ENCODE measurements at regions of chr4 and their contacts with region 1.

Region 1: GRCh38 chr4:78288327-78288726 is 231.2 kb downstream of the FRAS1 start:
- DNase-seq: no peak
- H3K4me3 ChIP-seq: no peak overlapping the region
- H3K27ac ChIP-seq: no peak overlapping the region
- H3K4me1 ChIP-seq: peaks cover 11% of the 10 kb centered on the region
- H3K27me3 ChIP-seq: no peaks in the 10 kb centered on the region
- CTCF ChIP-seq: no peak

Region 2: DNA sequence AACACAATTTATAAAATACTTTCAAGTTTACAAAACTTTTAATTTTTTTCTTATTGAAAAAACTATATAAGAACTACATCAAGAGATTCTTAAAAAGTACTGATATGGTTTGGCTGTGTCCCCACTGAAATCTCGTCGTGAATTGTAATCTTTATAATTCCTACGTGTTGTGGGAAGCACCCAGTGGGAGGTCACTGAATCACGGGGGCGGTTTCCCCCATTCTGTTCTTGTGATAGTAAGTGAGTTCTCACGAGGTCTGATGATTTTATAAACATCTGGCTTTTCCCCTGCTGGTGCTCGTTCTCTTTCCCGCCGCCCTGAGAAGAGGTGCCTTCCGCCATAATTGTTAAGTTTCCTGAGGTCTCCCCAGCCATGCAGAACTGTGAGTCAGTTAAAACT is 142.7 kb before region 1 on chr4:
- CTCF ChIA-PET with region 1: no interaction called
- POLR2A ChIA-PET with region 1: interaction called, 15 read pairs
- intact Hi-C with region 1: no loop called
- DNase-seq: no peak
- H3K4me3 ChIP-seq: no peak overlapping the region
- H3K27ac ChIP-seq: no peak overlapping the region
- H3K4me1 ChIP-seq: no peaks in the 10 kb centered on the region
- H3K27me3 ChIP-seq: no peaks in the 10 kb centered on the region
- CTCF ChIP-seq: no peak

Region 3: DNA sequence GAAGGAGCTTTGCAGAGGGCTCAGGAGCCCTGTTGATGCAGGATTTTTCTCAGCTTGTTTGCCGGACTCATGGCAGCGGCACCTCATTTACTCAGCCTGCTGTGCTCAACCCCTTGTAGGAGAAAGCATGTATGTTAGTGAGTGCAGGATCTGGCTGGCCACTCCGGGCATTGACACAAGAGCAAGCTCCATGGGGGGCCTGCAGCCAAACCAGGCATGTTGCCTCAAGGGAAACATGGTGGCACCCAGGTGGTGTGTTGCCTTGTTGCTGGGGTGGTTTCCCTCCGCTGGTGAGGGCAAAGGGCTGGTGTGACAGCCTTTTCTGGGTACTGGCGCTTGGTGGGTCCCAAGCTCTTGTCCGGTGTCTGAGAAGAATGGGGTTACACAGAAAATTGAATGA is 74.0 kb after region 1 on chr4:
- CTCF ChIA-PET with region 1: no interaction called
- POLR2A ChIA-PET with region 1: no interaction called
- intact Hi-C with region 1: no loop called
- DNase-seq: no peak
- H3K4me3 ChIP-seq: no peak overlapping the region
- H3K27ac ChIP-seq: no peak overlapping the region
- H3K4me1 ChIP-seq: no peaks in the 10 kb centered on the region
- H3K27me3 ChIP-seq: no peaks in the 10 kb centered on the region
- CTCF ChIP-seq: no peak

Measured in PC-9 (cell line).